ENCODE measurements at regions of chr11 and their contacts with region 1.

Region 1: DNA sequence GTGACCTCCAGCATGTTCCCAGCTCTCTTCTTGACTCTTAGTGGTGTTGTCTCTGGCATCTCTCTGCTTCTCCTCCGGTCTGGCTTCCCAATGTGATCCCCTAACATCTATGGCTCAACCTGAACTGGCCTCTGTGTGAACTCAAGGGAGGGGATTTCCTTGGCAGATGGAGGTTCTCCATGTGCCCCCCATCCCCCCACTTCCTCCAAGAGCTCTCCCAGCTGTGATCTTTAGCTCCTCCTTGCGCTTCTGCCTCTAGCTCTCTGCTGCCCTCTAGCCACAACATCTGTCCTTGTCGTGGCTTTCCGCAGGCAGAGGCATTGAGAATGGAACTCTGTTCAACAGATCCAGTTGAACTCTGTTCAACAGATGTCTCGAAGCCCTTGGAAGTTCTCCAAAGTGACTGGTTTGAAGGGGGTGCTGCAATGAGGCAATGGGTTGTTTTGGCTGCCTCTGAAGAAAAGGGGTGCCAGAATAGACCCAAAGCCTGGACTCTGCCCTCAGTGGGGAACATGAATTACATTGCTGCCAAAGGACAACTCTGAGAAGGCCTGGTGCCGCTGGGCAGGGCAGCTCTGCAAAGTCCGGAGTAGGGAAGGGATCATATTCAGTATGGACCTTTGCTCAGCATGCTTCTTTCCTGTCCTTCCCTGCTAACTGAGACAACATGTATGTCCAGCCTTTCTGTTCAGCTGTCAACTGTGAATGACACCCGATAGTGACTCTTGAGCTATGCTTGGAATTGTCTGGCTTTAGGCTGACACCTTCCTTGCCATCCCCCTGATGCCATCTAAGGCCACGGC is 61.9 kb downstream of the ADM start:
- DNase-seq: peak; percentile 98
- H3K4me3 ChIP-seq: no peak overlapping the region
- H3K27ac ChIP-seq: peak overlapping the region; percentile 73
- H3K27me3 ChIP-seq: no peaks in the 10 kb centered on the region
- CTCF ChIP-seq: peak; percentile 97

Region 2: DNA sequence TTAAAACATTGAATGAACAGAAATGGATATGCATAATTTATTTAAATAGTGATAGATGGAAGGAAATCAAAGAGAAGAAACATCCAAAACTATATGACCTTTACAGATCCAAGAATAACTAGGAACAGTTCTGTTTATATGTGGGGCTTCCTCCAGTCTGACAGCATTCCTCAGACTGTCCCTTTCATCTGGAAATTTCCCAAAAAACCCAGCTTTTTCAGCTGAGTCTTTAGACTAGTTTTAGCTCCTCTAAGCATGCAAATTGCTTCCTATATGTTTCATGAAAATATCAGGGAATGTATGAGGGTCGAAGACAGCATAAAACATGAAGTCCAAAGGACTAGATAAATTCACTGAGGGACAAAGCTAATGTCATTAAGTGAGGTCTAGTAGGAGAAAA is 204.1 kb before region 1 on chr11:
- CTCF ChIA-PET with region 1: no interaction called
- POLR2A ChIA-PET with region 1: no interaction called
- DNase-seq: no peak
- H3K4me3 ChIP-seq: no peak overlapping the region
- H3K27ac ChIP-seq: no peak overlapping the region
- H3K27me3 ChIP-seq: no peaks in the 10 kb centered on the region
- CTCF ChIP-seq: no peak

Region 3: GRCh38 chr11:10322830-10323792 is 43.7 kb before region 1 on chr11:
- CTCF ChIA-PET with region 1: interaction called, 22 read pairs
- POLR2A ChIA-PET with region 1: interaction called, 30 read pairs
- DNase-seq: no peak
- H3K4me3 ChIP-seq: no peak overlapping the region
- H3K27ac ChIP-seq: peak overlapping the region; percentile 68
- H3K27me3 ChIP-seq: no peaks in the 10 kb centered on the region
- CTCF ChIP-seq: peak; percentile 59

Region 4: DNA sequence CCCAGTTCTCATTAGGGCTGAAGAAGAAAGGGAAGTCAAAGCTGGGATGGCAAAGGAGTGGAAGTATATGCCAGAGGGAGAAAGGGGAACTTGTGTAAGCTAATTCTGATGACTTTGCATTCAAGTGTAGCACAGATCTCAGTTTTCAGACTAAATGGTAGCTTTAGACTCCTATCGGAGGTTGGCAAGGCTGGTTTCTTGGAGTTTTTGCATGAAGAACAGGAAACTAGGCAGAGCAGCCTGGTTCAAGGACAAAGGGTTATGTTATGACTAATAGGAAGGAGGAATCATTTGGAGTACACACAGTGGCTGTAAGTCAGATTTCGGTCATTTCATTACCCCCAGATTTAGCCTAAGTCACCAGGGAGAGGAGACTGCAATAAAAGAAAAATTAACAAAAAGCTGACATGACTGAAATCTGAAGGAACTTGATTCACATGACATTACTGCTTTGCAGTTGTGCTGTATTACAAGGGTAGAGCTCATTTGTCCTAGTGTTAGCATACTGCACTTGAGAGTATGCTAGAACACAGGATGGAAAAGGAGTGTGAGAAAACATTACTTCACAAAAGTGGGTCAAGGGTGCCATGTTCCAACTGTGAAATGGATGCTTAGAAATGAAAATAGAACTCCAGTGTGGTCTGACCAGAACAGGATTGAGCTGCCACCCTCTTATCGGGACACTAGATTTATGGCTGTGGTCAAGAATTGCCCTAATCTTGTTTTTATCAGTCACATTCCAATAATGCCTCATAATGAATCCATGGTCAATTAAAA is 38.3 kb before region 1 on chr11:
- CTCF ChIA-PET with region 1: interaction called, 22 read pairs
- POLR2A ChIA-PET with region 1: interaction called, 30 read pairs
- DNase-seq: no peak
- H3K4me3 ChIP-seq: no peak overlapping the region
- H3K27ac ChIP-seq: no peak overlapping the region
- H3K27me3 ChIP-seq: no peaks in the 10 kb centered on the region
- CTCF ChIP-seq: no peak

Region 5: GRCh38 chr11:10351768-10352641 is 14.8 kb before region 1 on chr11:
- CTCF ChIA-PET with region 1: interaction called, 27 read pairs
- POLR2A ChIA-PET with region 1: interaction called, 6 read pairs
- DNase-seq: peak; percentile 80
- H3K4me3 ChIP-seq: no peak overlapping the region
- H3K27ac ChIP-seq: peak overlapping the region; percentile 87
- H3K27me3 ChIP-seq: no peaks in the 10 kb centered on the region
- CTCF ChIP-seq: no peak

Region 6: GRCh38 chr11:10379022-10379421 is 12.3 kb after region 1 on chr11:
- CTCF ChIA-PET with region 1: interaction called, 17 read pairs
- POLR2A ChIA-PET with region 1: interaction called, 5 read pairs
- DNase-seq: no peak
- H3K4me3 ChIP-seq: no peak overlapping the region
- H3K27ac ChIP-seq: no peak overlapping the region
- H3K27me3 ChIP-seq: no peaks in the 10 kb centered on the region
- CTCF ChIP-seq: no peak

Region 7: GRCh38 chr11:10387206-10388083 is 20.7 kb after region 1 on chr11:
- CTCF ChIA-PET with region 1: interaction called, 10 read pairs
- POLR2A ChIA-PET with region 1: interaction called, 3 read pairs
- DNase-seq: peak; percentile 92
- H3K4me3 ChIP-seq: no peak overlapping the region
- H3K27ac ChIP-seq: peak overlapping the region; percentile 93
- H3K27me3 ChIP-seq: no peaks in the 10 kb centered on the region
- CTCF ChIP-seq: peak; percentile 11; the same call in 1 of the 2 replicates

Region 8: GRCh38 chr11:10412276-10412675 is 45.5 kb after region 1 on chr11:
- CTCF ChIA-PET with region 1: no interaction called
- POLR2A ChIA-PET with region 1: no interaction called
- DNase-seq: no peak
- H3K4me3 ChIP-seq: no peak overlapping the region
- H3K27ac ChIP-seq: no peak overlapping the region
- H3K27me3 ChIP-seq: no peaks in the 10 kb centered on the region
- CTCF ChIP-seq: no peak